ENCODE measurements at regions of chr15 and their contacts with region 1.

Region 1: DNA sequence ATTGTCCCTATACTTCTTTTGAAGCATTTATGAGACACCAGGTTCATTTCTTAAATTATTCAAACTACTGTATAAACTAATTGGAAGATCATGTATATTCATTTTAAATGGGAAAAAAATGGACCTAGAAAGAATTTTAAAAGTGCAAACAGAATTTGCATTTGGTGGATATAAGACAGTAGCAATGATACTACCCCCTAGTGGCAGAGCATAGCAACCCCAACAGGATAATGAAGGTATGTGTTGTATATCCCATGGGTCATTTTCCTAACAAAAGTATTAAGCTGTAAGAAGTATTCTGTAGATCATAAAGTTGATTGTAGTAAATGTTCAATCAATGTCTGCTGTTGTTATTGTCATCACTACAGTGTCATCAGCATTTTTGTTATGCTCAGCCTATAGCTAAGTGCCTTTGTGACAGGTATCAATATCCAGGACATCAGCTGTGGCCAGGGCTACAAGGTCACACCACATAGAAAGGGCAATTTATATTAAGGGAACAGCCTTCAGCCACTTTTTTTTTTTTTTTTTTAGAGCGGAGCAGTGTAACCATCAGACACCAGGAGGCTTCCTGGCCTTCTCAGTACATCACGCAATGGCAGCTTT is 175.8 kb downstream of the FOXB1 start:
- DNase-seq: peak; percentile 18
- H3K4me3 ChIP-seq: no peak overlapping the region
- H3K27ac ChIP-seq: no peak overlapping the region
- H3K27me3 ChIP-seq: no peaks in the 10 kb centered on the region
- CTCF ChIP-seq: peak; percentile 91

Region 2: GRCh38 chr15:59725172-59725486 is 454.8 kb before region 1 on chr15:
- CTCF ChIA-PET with region 1: interaction called, 34 read pairs
- POLR2A ChIA-PET with region 1: no interaction called
- DNase-seq: no peak
- H3K4me3 ChIP-seq: no peak overlapping the region
- H3K27ac ChIP-seq: no peak overlapping the region
- H3K27me3 ChIP-seq: peaks cover 4% of the 10 kb centered on the region
- CTCF ChIP-seq: no peak

Region 3: GRCh38 chr15:59917504-59918157 is 262.3 kb before region 1 on chr15:
- CTCF ChIA-PET with region 1: interaction called, 13 read pairs
- POLR2A ChIA-PET with region 1: no interaction called
- DNase-seq: no peak
- H3K4me3 ChIP-seq: no peak overlapping the region
- H3K27ac ChIP-seq: no peak overlapping the region
- H3K27me3 ChIP-seq: no peaks in the 10 kb centered on the region
- CTCF ChIP-seq: peak; percentile 44; the same call in 1 of the 2 replicates

Region 4: DNA sequence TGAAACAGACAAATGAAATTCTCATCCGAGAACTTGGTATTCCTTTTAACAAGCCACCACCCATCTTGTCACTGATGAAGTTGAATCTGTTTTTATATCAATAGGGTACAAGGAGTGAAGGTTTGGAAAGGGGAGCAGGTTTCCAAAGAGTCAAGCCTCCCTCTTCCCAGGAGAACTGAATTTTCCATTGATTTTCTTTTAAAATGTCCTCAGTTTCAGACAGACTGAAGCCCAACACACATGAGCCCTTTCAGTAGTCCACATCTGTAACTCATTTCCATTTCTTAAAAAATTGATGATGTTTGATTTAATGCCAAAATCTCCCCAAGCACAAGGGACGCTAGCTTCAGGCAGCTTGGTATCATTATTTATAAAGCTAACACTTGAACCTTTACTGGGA is 11.9 kb after region 1 on chr15:
- CTCF ChIA-PET with region 1: interaction called, 11 read pairs
- POLR2A ChIA-PET with region 1: no interaction called
- DNase-seq: no peak
- H3K4me3 ChIP-seq: no peak overlapping the region
- H3K27ac ChIP-seq: no peak overlapping the region
- H3K27me3 ChIP-seq: peaks cover 4% of the 10 kb centered on the region
- CTCF ChIP-seq: no peak